ENCODE measurements at regions of chr1 and their contacts with region 1.

Region 1: DNA sequence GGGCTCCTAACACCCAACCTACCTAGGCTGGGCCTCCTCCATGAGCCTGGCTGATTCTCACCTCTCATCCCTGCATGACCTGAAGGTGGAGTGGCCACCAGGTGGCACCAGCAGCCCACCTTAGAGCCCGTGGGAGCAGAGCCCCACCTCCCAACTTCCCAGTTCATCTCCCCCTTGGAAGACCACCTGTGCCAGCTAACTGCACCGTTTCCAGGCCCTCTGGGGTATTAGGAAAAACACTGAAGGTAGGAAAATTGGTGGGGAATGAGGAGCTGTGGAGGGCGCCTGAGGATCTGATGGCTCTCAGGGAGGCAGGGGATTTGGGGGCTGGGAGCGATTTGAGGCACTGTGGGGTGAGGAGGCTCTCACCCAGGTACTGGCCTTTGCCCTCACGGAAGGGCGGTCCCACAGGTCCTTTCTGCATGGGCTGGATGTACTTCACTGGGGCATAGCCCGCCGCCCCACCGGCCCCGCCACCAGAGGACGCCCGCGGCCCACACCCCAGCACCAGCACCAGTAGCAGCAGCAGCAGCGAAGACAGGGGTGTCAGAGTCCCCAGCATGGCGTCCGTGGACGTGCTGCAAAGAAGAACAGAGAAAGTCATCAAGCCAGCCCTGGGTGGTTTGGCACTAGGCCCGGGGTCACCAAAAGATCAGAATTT is 11.1 kb downstream of the ADPRS start:
- DNase-seq: peak in 1 of 2 donors; percentile 94
- H3K4me3 ChIP-seq: no peak overlapping the region
- CTCF ChIP-seq: peak in 1 of 3 donors; percentile 73
- POLR2A ChIP-seq: no peak

Region 2: GRCh38 chr1:35971601-35972000 is 128.2 kb before region 1 on chr1:
- intact Hi-C with region 1: no loop called
- DNase-seq: no peak
- H3K4me3 ChIP-seq: no peak overlapping the region
- CTCF ChIP-seq: no peak
- POLR2A ChIP-seq: no peak

Region 3: GRCh38 chr1:36034692-36035091 is 65.1 kb before region 1 on chr1:
- intact Hi-C with region 1: no loop called
- DNase-seq: no peak
- H3K4me3 ChIP-seq: no peak overlapping the region
- CTCF ChIP-seq: no peak
- POLR2A ChIP-seq: no peak

Region 4: DNA sequence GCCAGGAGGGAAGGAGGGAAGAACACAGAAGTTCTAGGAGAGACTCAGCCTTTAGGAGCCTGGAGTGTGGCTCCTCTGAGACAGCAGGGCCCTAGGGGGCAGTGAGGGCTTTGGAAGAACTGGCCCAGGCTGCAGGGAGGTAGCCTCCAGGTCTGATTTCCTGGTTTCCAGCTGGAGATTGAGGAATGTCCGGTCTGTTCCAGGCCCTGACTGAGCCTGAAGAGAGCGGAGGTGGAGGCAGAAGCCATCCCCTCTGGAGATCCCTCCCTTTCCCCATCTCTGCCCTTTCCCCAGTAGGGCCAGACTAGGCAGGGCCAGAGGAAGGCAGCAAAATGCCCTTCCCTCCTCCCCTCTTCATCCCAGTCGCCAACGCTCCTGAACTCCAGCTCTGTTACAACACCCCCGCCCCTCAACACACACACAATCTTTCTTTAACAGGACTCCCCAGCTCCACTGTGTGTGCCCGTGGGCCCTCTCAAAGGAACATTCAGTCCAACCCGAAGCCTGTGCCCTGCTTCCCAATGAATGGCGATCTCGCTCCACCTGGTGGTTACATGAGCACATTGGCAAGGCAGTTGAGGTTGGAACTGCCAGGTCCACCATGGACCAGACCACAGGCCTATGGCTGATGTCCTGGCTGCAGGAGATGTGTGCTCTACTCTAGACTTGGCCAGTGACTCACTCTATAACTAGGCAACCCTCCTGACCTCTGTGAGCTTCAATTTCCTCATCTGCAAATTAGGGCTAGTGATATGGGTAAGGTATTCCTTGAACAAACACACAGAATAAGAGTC is 88.2 kb after region 1 on chr1:
- intact Hi-C with region 1: loop called (anchors 2 kb)
- DNase-seq: peak; percentile 84 to 96
- H3K4me3 ChIP-seq: no peak overlapping the region
- CTCF ChIP-seq: peak in 1 of 3 donors; percentile 93
- POLR2A ChIP-seq: no peak

Region 5: GRCh38 chr1:36285448-36286101 is 185.8 kb after region 1 on chr1:
- intact Hi-C with region 1: loop called (anchors 5 kb)
- DNase-seq: peak in 1 of 2 donors; percentile 80
- H3K4me3 ChIP-seq: no peak overlapping the region
- CTCF ChIP-seq: peak in 1 of 3 donors; percentile 37
- POLR2A ChIP-seq: no peak